GM12878 (cell line): ENCODE measurements at regions of chr3 and their contacts with region 1.

Region 1: GRCh38 chr3:33433843-33434242 is 6.4 kb downstream of the UBP1 start:
- DNase-seq: no peak
- ATAC-seq: no peak
- H3K4me3 ChIP-seq: no peak overlapping the region
- H3K27ac ChIP-seq: no peak overlapping the region
- H3K4me1 ChIP-seq: peaks cover 30% of the 10 kb centered on the region
- H3K27me3 ChIP-seq: no peaks in the 10 kb centered on the region
- CTCF ChIP-seq: no peak
- EP300 ChIP-seq: no peak
- POLR2A ChIP-seq: no peak
- RAD21 ChIP-seq: no peak

Region 2: GRCh38 chr3:33417066-33417673 is 16.7 kb before region 1 on chr3:
- CTCF ChIA-PET with region 1: interaction called, 5 read pairs
- POLR2A ChIA-PET with region 1: interaction called, 4 read pairs
- RAD21 ChIA-PET with region 1: interaction called, 7 read pairs
- SMC1A ChIA-PET with region 1: interaction called, 5 read pairs
- in situ Hi-C with region 1: no loop called
- intact Hi-C with region 1: loop called (anchors 2 kb)
- DNase-seq: no peak
- ATAC-seq: 0 out of 3 replicates have a peak, but pooled peaks have one; percentile 25
- H3K4me3 ChIP-seq: no peak overlapping the region
- H3K27ac ChIP-seq: no peak overlapping the region
- H3K4me1 ChIP-seq: peaks cover 11% of the 10 kb centered on the region
- H3K27me3 ChIP-seq: no peaks in the 10 kb centered on the region
- CTCF ChIP-seq: no peak
- EP300 ChIP-seq: no peak
- POLR2A ChIP-seq: no peak
- RAD21 ChIP-seq: no peak

Region 3: DNA sequence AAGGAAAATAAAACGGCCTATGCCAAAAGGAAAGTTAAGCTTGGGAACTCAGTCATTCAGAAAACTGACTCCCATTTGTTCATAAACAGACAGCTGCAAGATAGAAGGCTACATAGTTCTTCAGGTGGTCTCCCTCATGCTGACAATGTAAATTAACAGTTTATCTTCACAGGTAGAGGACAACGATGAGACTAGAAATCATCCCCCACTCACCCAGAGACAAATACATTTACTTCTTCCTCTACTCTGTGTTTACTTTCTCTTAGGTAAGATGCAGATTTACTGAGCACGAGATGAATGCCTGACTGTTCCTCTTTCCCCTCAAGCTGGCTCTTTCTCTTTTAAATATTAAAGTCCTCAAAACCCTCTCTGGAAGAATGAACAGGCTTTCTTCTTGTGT is 124.0 kb after region 1 on chr3:
- CTCF ChIA-PET with region 1: no interaction called
- POLR2A ChIA-PET with region 1: no interaction called
- RAD21 ChIA-PET with region 1: no interaction called
- SMC1A ChIA-PET with region 1: no interaction called
- in situ Hi-C with region 1: no loop called
- intact Hi-C with region 1: no loop called
- DNase-seq: no peak
- ATAC-seq: no peak
- H3K4me3 ChIP-seq: no peak overlapping the region
- H3K27ac ChIP-seq: no peak overlapping the region
- H3K4me1 ChIP-seq: no peaks in the 10 kb centered on the region
- H3K27me3 ChIP-seq: no peaks in the 10 kb centered on the region
- CTCF ChIP-seq: no peak
- EP300 ChIP-seq: no peak
- POLR2A ChIP-seq: no peak
- RAD21 ChIP-seq: no peak

Region 4: DNA sequence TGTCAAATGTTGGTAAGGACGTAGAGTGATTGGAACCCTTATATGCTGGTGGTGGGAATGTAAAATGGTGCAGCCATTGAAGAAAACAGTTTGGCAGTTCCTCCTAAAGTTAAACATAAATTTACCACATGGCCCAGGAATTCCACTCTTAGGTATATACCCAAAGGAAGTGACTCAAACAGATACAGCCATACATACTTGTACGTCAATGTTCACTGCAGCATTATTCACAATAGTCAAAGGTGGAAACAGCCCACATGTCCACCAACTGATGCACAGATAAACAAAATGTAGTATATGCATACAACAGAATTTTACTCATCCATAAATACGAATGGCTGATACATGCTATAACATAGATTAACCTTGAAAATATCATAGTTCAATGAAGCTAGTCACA is 271.0 kb after region 1 on chr3:
- CTCF ChIA-PET with region 1: no interaction called
- POLR2A ChIA-PET with region 1: no interaction called
- RAD21 ChIA-PET with region 1: no interaction called
- SMC1A ChIA-PET with region 1: no interaction called
- in situ Hi-C with region 1: no loop called
- intact Hi-C with region 1: no loop called
- DNase-seq: no peak
- ATAC-seq: 0 out of 3 replicates have a peak, but pooled peaks have one; percentile 20
- H3K4me3 ChIP-seq: no peak overlapping the region
- H3K27ac ChIP-seq: no peak overlapping the region
- H3K4me1 ChIP-seq: no peaks in the 10 kb centered on the region
- H3K27me3 ChIP-seq: no peaks in the 10 kb centered on the region
- CTCF ChIP-seq: no peak
- EP300 ChIP-seq: no peak
- POLR2A ChIP-seq: no peak
- RAD21 ChIP-seq: no peak

Region 5: GRCh38 chr3:33773637-33774036 is 339.8 kb after region 1 on chr3:
- CTCF ChIA-PET with region 1: no interaction called
- POLR2A ChIA-PET with region 1: no interaction called
- RAD21 ChIA-PET with region 1: no interaction called
- SMC1A ChIA-PET with region 1: no interaction called
- in situ Hi-C with region 1: no loop called
- intact Hi-C with region 1: no loop called
- DNase-seq: no peak
- ATAC-seq: no peak
- H3K4me3 ChIP-seq: no peak overlapping the region
- H3K27ac ChIP-seq: no peak overlapping the region
- H3K4me1 ChIP-seq: no peaks in the 10 kb centered on the region
- H3K27me3 ChIP-seq: no peaks in the 10 kb centered on the region
- CTCF ChIP-seq: no peak
- EP300 ChIP-seq: no peak
- POLR2A ChIP-seq: no peak
- RAD21 ChIP-seq: no peak